Breast epithelium (tissue), 4 donors: ENCODE measurements at regions of chr12 and their contacts with region 1.

Region 1: DNA sequence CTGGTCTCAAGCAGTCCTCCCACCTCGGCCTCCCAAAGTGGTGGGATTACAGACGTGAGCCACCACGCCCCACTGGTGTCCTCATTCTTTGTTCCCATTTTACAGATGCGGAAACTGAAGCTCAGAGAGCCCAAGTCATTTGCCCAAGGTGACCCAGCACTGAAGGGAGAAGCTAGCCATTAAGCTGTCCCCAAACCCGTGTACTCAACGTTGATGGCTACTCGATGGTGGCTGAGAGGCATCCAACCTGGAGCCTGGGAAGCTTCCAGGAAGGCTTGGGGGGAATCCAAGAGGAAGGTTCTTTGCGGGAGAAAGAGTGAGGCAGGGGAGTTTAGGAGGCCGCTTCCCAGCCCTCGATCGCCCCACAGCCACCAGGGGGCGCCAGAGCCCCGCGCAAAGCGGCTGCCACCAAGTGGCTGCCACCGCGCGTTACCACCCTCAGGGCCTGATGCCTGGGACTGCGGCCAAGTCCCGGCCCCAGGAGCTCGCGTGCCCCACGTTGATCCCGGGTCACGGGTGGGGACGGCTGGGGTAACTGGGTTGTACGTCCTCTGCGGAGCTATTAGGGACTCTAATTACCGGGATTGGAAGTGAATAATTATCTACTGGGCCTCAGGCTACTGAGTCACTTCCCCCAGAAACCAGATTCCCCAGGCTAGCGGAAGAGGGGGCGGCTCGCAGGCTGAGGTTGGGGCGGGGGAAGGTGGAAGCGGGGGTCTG is 8.8 kb upstream of the SH2B3 start:
- DNase-seq: peak; percentile 64 to 84
- H3K4me3 ChIP-seq: peak overlapping the region; percentile 15 to 62 (median 24)
- H3K27ac ChIP-seq: peak overlapping the region; percentile 45
- H3K4me1 ChIP-seq: peaks cover 0 to 3% of the 10 kb centered on the region in 2 donors
- H3K27me3 ChIP-seq: no peaks in the 10 kb centered on the region
- CTCF ChIP-seq: peak; percentile 90 to 99 (median 99)
- POLR2A ChIP-seq: no peak

Region 2: GRCh38 chr12:111444925-111445725 is 48.2 kb after region 1 on chr12:
- intact Hi-C with region 1: loop called (anchors 5 kb)
- DNase-seq: no peak
- H3K4me3 ChIP-seq: peak overlapping the region in 1 of 3 donors; percentile 30
- H3K27ac ChIP-seq: peak overlapping the region; percentile 45 to 80
- H3K4me1 ChIP-seq: peaks cover 0 to 4% of the 10 kb centered on the region in 2 donors
- H3K27me3 ChIP-seq: no peaks in the 10 kb centered on the region
- CTCF ChIP-seq: no peak
- POLR2A ChIP-seq: no peak

Region 3: GRCh38 chr12:111673503-111673902 is 276.6 kb after region 1 on chr12:
- intact Hi-C with region 1: loop called (anchors 10 kb)
- DNase-seq: no peak
- H3K4me3 ChIP-seq: no peak overlapping the region
- H3K27ac ChIP-seq: no peak overlapping the region
- H3K4me1 ChIP-seq: no peaks in the 10 kb centered on the region
- H3K27me3 ChIP-seq: no peaks in the 10 kb centered on the region
- CTCF ChIP-seq: peak in 1 of 3 donors; percentile 23
- POLR2A ChIP-seq: no peak